ENCODE measurements at regions of chr19 and their contacts with region 1.

Region 1: DNA sequence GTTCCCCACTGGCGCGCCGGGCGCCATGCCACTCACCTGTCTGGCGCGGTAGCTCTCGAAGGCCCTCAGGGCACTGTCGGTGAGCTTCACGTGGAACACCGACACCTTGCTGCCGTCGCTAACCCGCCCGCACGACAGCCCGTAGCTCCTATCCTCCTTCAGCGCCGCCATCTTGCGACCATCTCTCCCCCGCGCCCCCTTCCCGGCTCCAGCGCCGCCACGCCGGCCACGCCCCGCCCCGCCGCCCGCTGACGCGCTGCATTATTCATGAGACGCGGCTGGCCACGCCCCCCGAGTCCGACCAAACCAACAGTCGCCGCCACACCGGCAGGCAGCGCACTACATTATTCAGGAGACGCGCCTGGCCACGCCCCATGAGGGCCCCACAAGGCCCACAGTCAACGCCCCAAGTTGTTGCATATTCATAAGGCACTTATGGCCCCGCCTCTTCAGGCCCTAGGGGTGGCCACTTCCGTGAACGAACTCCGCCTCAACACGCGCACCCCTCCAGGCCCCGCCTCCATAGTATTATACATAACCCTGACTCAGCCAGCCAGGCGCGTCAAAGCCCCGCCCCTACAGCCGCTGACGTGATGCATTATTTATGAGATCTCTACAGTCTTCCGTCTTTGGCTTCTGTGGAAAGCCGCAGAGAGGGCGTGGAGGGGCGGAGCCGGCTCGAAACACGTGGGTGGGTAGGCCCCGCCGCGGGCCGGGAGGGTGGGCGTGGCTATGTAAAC is at the start of gene ELL:
- DNase-seq: peak; percentile 100
- H3K4me3 Mint-ChIP-seq: peak within 1 kb of the TSS; percentile 93
- H3K27ac Mint-ChIP-seq: peak within 1 kb of the TSS; percentile 87
- H3K4me1 Mint-ChIP-seq: peaks cover 18% of the 10 kb centered on the region
- H3K27me3 Mint-ChIP-seq: no peaks in the 10 kb centered on the region
- total RNA-seq, gene ELL: 26.2 to 26.3 TPM

Region 2: GRCh38 chr19:18484992-18485391 is 37.1 kb before region 1 on chr19:
- CTCF ChIA-PET with region 1: interaction called, 15 read pairs
- POLR2A ChIA-PET with region 1: interaction called, 5 read pairs
- DNase-seq: no peak
- H3K4me3 Mint-ChIP-seq: no peak overlapping the region
- H3K27ac Mint-ChIP-seq: peak overlapping the region; percentile 49
- H3K4me1 Mint-ChIP-seq: peaks cover 84% of the 10 kb centered on the region
- H3K27me3 Mint-ChIP-seq: no peaks in the 10 kb centered on the region

Region 3: DNA sequence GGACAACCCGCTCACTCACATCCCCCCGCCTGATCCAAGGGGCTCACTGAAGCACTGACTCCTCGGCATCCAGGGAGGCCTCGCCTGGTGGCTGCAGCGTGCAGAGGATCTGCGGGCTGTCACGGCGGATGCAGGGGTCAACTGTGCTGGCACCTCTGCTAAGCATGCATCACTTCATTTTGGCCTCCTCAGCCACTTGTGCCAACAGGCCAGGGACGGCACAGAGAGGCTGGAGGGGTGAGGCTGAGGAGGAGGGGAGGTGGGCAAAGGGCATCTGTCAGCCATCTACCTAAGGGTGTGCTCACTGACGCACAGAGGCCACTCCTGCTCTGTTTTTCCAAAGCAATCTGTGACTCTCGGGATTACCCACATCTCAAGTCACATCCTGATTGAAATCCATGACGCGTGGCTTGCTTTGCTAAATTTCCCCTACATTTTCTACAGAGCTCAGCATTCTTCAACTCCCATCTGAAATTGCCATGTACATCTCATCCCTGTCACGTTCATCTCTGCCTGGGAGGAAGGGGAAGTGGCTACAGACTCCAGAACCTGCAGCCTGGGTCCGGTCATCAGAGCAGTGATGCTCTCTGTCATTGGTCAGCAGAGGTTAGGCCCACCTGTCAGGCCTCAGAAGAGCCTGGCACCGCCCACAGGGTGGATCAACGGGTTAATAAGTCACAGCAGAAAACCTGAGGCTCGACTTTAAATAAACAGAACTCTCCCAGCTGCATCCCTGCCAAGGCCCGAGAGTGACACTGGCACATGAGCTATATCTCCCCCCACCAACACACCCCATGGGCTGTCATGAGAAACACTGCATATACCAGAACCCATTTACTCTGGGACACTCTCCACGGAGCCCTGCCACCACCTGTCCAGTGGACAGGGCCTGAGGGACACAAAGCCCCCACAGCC is 17.8 kb before region 1 on chr19:
- CTCF ChIA-PET with region 1: interaction called, 37 read pairs
- POLR2A ChIA-PET with region 1: interaction called, 43 read pairs
- DNase-seq: no peak
- H3K4me3 Mint-ChIP-seq: no peak overlapping the region
- H3K27ac Mint-ChIP-seq: peak overlapping the region; percentile 35
- H3K4me1 Mint-ChIP-seq: peaks cover 93% of the 10 kb centered on the region
- H3K27me3 Mint-ChIP-seq: no peaks in the 10 kb centered on the region

Region 4: GRCh38 chr19:18557474-18558201 is 35.6 kb after region 1 on chr19 and contains the start of gene KXD1:
- CTCF ChIA-PET with region 1: interaction called, 29 read pairs
- POLR2A ChIA-PET with region 1: interaction called, 47 read pairs
- DNase-seq: peak; percentile 99
- H3K4me3 Mint-ChIP-seq: peak within 1 kb of the TSS; percentile 95
- H3K27ac Mint-ChIP-seq: peak within 1 kb of the TSS; percentile 87
- H3K4me1 Mint-ChIP-seq: peaks cover 22% of the 10 kb centered on the region
- H3K27me3 Mint-ChIP-seq: no peaks in the 10 kb centered on the region
- total RNA-seq, gene KXD1: 93.0 to 99.1 TPM

Region 5: DNA sequence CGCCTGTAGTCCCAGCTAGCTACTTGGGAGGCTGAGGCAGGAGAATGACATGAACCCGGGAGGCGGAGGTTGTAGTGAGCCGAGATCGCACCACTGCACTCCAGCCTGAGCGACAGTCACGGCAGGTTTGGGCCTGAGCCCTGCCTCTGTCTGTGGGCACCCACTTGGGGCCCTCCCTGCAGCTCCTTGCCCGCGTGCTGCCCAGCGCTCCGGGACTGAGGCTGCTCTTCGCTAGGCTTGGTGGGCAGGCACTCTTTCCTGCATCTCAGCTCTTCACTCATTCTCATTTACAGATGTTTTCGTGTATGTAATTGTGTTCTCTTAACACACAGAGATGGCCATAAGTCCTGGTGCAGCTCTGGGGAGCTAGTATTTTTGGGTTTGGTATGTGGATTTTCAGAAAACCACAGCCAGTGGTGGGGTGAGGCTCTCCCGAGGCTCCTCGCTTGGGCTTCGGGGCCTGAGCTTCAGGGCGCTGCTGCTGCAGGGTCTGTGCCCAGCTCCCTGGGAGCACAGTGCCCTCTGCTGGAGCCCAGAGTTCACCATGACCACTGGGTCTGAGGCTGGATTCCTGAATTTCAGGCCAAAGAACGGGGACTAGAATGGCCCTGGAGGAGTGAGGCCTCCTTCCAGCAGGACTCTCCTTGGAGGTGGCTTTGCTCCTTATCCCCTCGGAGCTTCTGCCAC is 324.9 kb after region 1 on chr19:
- CTCF ChIA-PET with region 1: interaction called, 19 read pairs
- POLR2A ChIA-PET with region 1: interaction called, 4 read pairs
- DNase-seq: peak; percentile 72
- H3K4me3 Mint-ChIP-seq: no peak overlapping the region
- H3K27ac Mint-ChIP-seq: no peak overlapping the region
- H3K4me1 Mint-ChIP-seq: peaks cover 79% of the 10 kb centered on the region
- H3K27me3 Mint-ChIP-seq: no peaks in the 10 kb centered on the region

Measured in activated CD4-positive, alpha-beta memory T cell treated with anti-CD3 and anti-CD28 coated beads, Interleukin-2, amount 10 ng/mL, durations not matched to agents 7 days and 5 days (primary cell).